ENCODE measurements at regions of chr15 and their contacts with region 1.

Region 1: DNA sequence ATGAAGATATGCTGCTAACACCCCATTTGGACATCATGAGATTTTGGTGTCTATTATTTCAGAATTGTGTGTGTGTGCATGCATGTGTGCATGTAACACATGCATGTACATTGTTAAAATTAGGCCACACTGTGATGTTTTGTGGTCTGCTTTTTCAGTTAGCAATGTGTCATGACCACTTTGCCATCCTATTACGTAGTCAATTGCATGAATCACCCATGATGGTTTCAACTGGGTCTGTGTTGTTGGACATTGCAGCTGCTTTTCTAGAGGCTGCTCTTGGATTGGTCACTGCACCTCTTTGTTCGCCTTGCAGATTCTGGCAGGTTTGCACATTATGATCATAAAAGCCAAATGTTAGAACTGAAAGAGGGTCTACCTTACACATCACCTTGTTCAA is 101.0 kb upstream of the THBS1 start:
- DNase-seq: no peak
- ATAC-seq: no peak
- H3K4me3 Mint-ChIP-seq: no peak overlapping the region
- H3K27ac Mint-ChIP-seq: no peak overlapping the region
- H3K4me1 Mint-ChIP-seq: no peaks in the 10 kb centered on the region
- H3K27me3 Mint-ChIP-seq: peaks cover 8% of the 10 kb centered on the region

Region 2: GRCh38 chr15:39736412-39737197 is 256.7 kb after region 1 on chr15:
- CTCF ChIA-PET with region 1: no interaction called
- POLR2A ChIA-PET with region 1: no interaction called
- intact Hi-C with region 1: loop called in 1 of 2 experiments (anchors 5 kb)
- DNase-seq: no peak
- ATAC-seq: no peak
- H3K4me3 Mint-ChIP-seq: no peak overlapping the region
- H3K27ac Mint-ChIP-seq: no peak overlapping the region
- H3K4me1 Mint-ChIP-seq: no peaks in the 10 kb centered on the region
- H3K27me3 Mint-ChIP-seq: no peaks in the 10 kb centered on the region